Psoas muscle (tissue), 8 donors: ENCODE measurements at regions of chr14 and their contacts with region 1.

Region 1: DNA sequence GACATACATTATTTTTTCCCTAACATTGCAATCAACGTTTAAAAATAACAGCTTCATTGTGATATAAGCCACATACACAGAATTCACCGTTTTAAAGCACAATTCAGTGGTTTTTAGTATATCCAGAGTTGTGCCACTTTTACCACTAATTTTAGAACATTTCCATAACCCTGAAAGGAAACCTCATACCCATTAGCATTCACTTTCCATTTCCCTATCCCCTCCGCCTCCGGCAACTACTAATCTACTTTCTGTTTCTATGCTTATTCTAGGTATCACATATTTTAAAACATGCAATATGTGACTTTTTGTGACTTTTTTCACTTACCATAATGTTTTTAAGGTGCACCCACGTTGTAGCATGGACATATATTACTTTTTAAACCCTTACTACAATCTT is 55.6 kb upstream of the ISM2 start:
- DNase-seq: no peak
- ATAC-seq: no peak
- H3K4me3 ChIP-seq: no peak overlapping the region
- H3K27ac ChIP-seq: no peak overlapping the region
- H3K4me1 ChIP-seq: no peaks in the 10 kb centered on the region
- H3K27me3 ChIP-seq: no peaks in the 10 kb centered on the region
- CTCF ChIP-seq: no peak

Region 2: DNA sequence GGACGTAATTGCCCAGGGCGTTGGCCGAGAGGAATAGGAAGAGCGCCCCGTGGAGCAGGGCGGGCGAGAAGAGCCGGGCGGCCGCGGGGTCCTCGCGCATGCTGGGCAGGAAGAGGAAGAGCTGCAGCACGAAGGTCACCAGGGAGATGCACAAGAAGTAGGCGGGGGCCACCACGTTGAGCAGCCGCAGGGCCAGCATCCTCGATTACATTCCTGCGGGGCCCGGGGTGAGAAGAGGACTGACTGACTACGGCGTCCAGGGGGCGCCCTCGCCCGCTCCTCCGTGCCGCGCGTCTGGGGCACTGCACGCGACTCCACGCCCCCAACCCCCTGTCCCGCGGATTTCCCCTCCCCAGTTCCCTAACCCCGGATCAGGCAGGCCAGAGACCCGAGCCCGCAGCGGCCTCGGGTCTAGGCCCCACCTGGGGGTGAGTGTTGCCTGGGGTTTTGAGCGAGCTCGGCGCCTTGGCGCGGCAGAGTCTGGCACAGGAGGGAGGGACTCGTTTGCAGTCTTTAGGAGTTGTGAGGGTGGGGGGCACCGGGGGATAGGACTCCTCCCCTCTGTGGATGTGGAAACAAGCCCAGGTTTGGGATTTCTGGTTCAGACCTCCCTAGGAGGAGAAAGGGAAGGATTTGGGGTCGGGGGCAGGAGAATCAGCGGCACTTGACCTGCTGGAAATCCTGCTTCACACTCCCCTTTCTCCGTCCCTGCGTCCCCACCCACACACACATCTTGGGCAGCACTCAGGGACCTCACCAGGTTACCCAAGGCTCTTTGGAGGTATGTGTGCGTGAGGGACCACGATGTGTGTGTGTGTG is 414.5 kb before region 1 on chr14:
- intact Hi-C with region 1: loop called in 1 of 2 experiments (anchors 10 kb)
- DNase-seq: peak; percentile 27 to 61
- ATAC-seq: peak in 3 of 4 donors; percentile 37 to 62 (median 60)
- H3K4me3 ChIP-seq: peak overlapping the region; percentile 64
- H3K27ac ChIP-seq: no peak overlapping the region
- H3K4me1 ChIP-seq: peaks cover 13% of the 10 kb centered on the region
- H3K27me3 ChIP-seq: peaks cover 0 to 85% (median 22%) of the 10 kb centered on the region in 3 donors
- CTCF ChIP-seq: peak; percentile 28

Region 3: GRCh38 chr14:77508249-77508648 is 46.0 kb before region 1 on chr14:
- intact Hi-C with region 1: loop called in 1 of 2 experiments (anchors 2 kb)
- DNase-seq: no peak
- ATAC-seq: no peak
- H3K4me3 ChIP-seq: no peak overlapping the region
- H3K27ac ChIP-seq: no peak overlapping the region
- H3K4me1 ChIP-seq: no peaks in the 10 kb centered on the region
- H3K27me3 ChIP-seq: no peaks in the 10 kb centered on the region
- CTCF ChIP-seq: no peak